Aorta (tissue), 5 donors: ENCODE measurements at regions of chr3 and their contacts with region 1.

Region 1: GRCh38 chr3:53195602-53196574 is 34.9 kb downstream of the PRKCD start:
- DNase-seq: peak; percentile 63 to 88
- ATAC-seq: peak; percentile 85
- H3K4me3 ChIP-seq: no peak overlapping the region
- H3K27ac ChIP-seq: no peak overlapping the region
- H3K4me1 ChIP-seq: no peaks in the 10 kb centered on the region
- H3K27me3 ChIP-seq: no peaks in the 10 kb centered on the region

Region 2: DNA sequence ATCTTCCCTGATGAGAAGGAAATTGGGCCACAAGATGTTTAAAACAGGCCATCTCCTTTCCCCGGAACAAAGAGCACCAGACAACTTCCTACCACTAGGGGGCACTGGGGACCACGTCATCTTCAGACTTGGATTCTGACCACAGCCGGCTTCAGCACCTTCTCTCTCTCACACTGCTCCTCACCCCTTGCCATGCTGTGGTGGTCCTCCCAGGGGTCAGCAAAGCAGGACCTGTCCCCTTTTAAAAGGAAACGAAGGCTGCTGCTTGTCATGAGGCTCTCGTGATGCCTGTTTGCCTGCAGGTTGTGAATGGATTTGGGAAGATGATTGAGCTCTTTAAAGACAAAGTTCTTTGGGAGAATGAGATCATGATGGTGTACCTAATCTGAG is 81.9 kb before region 1 on chr3:
- intact Hi-C with region 1: loop called (anchors 1 kb)
- DNase-seq: peak; percentile 84 to 86
- ATAC-seq: peak; percentile 93
- H3K4me3 ChIP-seq: no peak overlapping the region
- H3K27ac ChIP-seq: no peak overlapping the region
- H3K4me1 ChIP-seq: no peaks in the 10 kb centered on the region
- H3K27me3 ChIP-seq: no peaks in the 10 kb centered on the region

Region 3: GRCh38 chr3:53130179-53131061 is 65.5 kb before region 1 on chr3 and contains the start of gene RFT1:
- intact Hi-C with region 1: loop called (anchors 1 to 5 kb)
- DNase-seq: peak; percentile 99
- ATAC-seq: peak; percentile 97
- H3K4me3 ChIP-seq: peak within 1 kb of the TSS; percentile 56 to 82
- H3K27ac ChIP-seq: peak within 1 kb of the TSS; percentile 80 to 92
- H3K4me1 ChIP-seq: peaks cover 0 to 6% of the 10 kb centered on the region in 2 donors
- H3K27me3 ChIP-seq: no peaks in the 10 kb centered on the region
- total RNA-seq, gene RFT1: 11.9 to 16.6 TPM

Region 4: DNA sequence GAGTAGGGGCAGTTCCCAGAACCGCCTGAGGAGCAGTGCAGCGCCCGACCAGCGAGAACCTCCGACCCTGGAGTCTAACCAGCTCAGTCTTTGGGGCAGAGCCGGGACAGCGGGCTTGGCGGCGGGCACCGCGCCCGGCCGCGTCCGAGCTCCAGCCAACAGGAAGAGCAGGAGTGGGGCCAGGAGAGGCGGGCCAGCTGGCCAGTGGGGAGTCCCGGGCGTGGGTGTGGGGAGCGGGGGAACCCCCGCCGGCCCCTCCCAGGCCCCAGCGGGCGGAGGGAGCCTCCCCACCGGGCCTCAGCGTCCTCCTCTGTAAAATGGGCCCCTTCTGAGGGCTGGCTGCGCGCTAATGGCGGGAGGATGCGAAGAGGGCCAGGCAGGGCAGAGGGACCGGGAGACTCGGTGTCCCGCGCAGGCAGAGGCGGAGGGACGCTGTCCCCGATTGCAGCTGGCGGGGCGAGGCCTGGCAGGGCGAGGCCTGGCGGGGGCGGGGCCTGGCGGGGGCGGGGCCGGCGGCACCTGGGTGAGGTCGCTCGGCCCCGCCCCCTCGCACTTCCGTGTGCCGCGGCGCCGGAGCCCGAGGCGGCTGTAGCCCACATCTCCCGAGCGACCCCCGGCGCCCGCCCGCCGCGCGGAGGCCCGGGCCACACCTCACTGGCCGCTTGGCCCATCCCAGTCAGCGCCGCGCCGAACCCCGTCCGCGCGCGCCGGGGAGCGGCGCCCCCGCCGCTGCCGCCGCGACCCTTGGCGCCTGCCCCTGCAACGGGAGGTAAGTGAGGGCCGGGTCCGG is 35.0 kb before region 1 on chr3 and contains the start of gene PRKCD:
- intact Hi-C with region 1: loop called in 1 of 2 experiments (anchors 2 kb)
- DNase-seq: peak; percentile 93 to 95
- ATAC-seq: peak; percentile 92
- H3K4me3 ChIP-seq: peak within 1 kb of the TSS; percentile 87 to 88
- H3K27ac ChIP-seq: peak within 1 kb of the TSS; percentile 31 to 87
- H3K4me1 ChIP-seq: no peaks in the 10 kb centered on the region
- H3K27me3 ChIP-seq: no peaks in the 10 kb centered on the region
- total RNA-seq, gene PRKCD: 23.6 to 33.4 TPM

Region 5: DNA sequence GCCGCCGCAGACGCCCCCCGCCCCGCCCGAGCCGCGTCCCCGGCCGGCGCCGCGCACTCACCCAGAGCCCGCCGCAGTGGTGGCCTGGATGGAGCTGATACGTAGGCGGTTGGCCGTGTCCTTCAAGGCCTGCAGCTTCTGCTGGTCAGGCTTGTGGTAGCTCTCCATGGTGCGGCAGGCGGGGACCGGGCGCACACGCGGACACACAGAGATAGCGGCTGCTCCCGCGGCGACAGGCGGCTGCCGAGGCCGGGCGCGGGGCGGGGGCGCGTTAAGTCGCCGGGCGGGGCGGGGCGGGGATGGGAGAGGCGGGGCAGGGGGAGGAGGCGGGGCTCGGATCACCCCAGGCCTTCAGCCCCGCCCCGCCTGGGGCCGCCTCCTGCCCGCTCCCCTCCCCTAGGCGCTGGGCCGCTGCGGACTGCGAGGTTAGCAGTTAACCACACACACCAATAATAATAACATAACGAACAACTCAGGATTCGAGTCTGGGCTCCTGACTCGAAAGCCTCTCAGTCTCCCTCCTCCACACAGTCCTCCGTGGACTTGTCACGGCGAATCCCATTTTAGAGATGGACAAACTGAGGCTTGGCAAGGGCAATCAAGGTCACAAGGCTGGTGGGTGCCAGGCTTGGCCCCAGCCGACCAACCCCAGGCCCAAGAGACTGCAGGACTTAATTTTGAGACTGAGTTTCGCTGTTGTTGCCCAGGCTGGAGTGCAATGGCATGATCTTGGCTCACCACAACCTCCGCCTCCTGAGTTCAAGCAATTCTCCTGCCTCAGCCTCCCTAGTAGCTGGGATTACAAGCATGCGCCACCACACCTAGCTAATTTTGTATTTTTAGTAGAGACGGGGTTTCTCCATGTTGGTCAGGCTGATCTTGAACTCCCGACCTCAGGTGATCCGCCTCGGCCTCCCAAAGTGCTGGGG is 60.2 kb after region 1 on chr3 and contains the start of gene TKT:
- intact Hi-C with region 1: no loop called
- DNase-seq: peak; percentile 92 to 96
- ATAC-seq: peak; percentile 92
- H3K4me3 ChIP-seq: peak within 1 kb of the TSS; percentile 75 to 93
- H3K27ac ChIP-seq: peak within 1 kb of the TSS in 1 of 2 donors; percentile 46
- H3K4me1 ChIP-seq: peaks cover 0 to 2% of the 10 kb centered on the region in 2 donors
- H3K27me3 ChIP-seq: no peaks in the 10 kb centered on the region
- total RNA-seq, gene TKT: 109 to 183 TPM

Region 6: DNA sequence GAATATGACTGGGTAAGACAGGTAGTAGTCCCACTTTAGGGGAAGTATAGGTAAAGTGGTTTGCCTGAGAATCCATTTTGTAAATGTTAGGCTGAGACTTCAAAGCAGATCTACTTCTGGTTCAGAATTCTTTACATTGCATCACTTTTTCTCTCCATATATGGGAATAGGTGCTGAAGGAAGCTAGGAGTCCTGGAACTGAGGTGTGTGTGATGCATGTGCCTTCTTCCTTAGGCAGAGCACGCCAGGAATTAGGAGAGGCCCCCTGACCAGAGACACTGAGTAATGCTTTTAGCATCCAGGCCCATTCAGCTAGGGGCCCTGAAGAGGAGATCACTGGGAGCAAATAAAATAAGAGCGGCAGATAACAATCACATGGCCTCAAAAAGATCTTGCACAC is 220.6 kb after region 1 on chr3:
- intact Hi-C with region 1: no loop called
- DNase-seq: no peak
- ATAC-seq: no peak
- H3K4me3 ChIP-seq: peak overlapping the region in 1 of 2 donors; percentile 23
- H3K27ac ChIP-seq: no peak overlapping the region
- H3K4me1 ChIP-seq: no peaks in the 10 kb centered on the region
- H3K27me3 ChIP-seq: no peaks in the 10 kb centered on the region